ENCODE measurements at regions of chr11 and their contacts with region 1.

Region 1: GRCh38 chr11:86938900-86939880 is 16.0 kb downstream of the FZD4 start:
- DNase-seq: no peak
- ATAC-seq: peak in 3 of 4 donors; percentile 22 to 56 (median 40)
- H3K4me3 ChIP-seq: peak overlapping the region; percentile 57
- H3K27ac ChIP-seq: peak overlapping the region; percentile 75
- H3K4me1 ChIP-seq: peaks cover 51% of the 10 kb centered on the region
- H3K27me3 ChIP-seq: no peaks in the 10 kb centered on the region
- CTCF ChIP-seq: peak; percentile 70

Region 2: DNA sequence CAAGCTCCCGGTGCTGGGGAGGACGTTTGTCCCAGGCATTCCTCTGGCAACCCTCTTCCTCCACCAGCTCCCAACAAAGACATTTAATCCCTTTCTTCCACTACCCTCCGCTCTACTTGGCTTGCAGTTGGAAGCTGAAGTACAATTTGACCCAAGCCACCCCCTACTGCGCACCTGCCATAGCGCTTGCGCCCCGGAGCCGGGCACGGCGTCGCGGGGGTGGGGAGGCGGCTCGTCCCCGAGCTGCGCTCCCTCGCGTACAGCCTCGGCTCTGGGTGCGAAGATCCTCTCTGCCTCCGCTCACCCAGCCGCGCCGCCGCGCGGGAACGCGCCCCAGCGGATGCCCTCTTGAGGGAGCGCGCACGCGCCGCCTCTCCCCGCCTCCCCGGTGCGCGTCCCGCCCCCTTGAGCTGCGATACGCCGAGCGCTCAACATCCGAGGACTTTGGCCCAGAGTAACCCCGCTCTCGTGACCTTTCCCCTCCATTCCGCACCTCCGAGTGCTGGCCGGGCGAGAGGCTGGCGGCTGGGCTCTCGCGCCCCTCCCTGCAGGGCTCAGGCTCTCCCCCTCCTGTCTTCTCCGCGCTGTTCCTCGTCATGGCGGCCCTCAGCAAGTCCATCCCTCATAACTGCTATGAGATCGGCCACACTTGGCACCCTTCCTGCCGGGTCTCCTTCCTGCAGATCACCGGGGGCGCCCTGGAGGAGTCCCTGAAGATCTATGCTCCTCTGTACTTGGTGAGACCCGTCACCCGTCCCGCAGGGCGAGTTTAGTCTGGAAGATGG is 98.5 kb after region 1 on chr11 and contains the start of gene TMEM135:
- intact Hi-C with region 1: loop called in 1 of 2 experiments (anchors 5 kb)
- DNase-seq: peak; percentile 95 to 97
- ATAC-seq: peak; percentile 97 to 98 (median 98)
- H3K4me3 ChIP-seq: peak within 1 kb of the TSS; percentile 93
- H3K27ac ChIP-seq: peak within 1 kb of the TSS; percentile 81
- H3K4me1 ChIP-seq: peaks cover 21% of the 10 kb centered on the region
- H3K27me3 ChIP-seq: no peaks in the 10 kb centered on the region
- CTCF ChIP-seq: peak; percentile 6
- total RNA-seq, gene TMEM135: 9.4 to 26.6 (median 16.2) TPM

Region 3: GRCh38 chr11:87125257-87125656 is 186.1 kb after region 1 on chr11:
- intact Hi-C with region 1: loop called in 1 of 2 experiments (anchors 10 kb)
- DNase-seq: no peak
- ATAC-seq: peak in 3 of 4 donors; percentile 85 to 89 (median 85)
- H3K4me3 ChIP-seq: no peak overlapping the region
- H3K27ac ChIP-seq: peak overlapping the region; percentile 62
- H3K4me1 ChIP-seq: peaks cover 6% of the 10 kb centered on the region
- H3K27me3 ChIP-seq: no peaks in the 10 kb centered on the region
- CTCF ChIP-seq: no peak

Region 4: GRCh38 chr11:87281496-87281895 is 342.3 kb after region 1 on chr11:
- intact Hi-C with region 1: loop called in 1 of 2 experiments (anchors 2 kb)
- DNase-seq: no peak
- ATAC-seq: peak; percentile 60 to 90 (median 76)
- H3K4me3 ChIP-seq: no peak overlapping the region
- H3K27ac ChIP-seq: no peak overlapping the region
- H3K4me1 ChIP-seq: peaks cover 16% of the 10 kb centered on the region
- H3K27me3 ChIP-seq: no peaks in the 10 kb centered on the region
- CTCF ChIP-seq: peak; percentile 31

Region 5: GRCh38 chr11:87290304-87290922 is 351.2 kb after region 1 on chr11:
- intact Hi-C with region 1: loop called (anchors 2 kb)
- DNase-seq: no peak
- ATAC-seq: peak in 2 of 4 donors; percentile 47 to 74
- H3K4me3 ChIP-seq: no peak overlapping the region
- H3K27ac ChIP-seq: no peak overlapping the region
- H3K4me1 ChIP-seq: no peaks in the 10 kb centered on the region
- H3K27me3 ChIP-seq: no peaks in the 10 kb centered on the region
- CTCF ChIP-seq: peak; percentile 74

Region 6: GRCh38 chr11:87421422-87421821 is 482.2 kb after region 1 on chr11:
- intact Hi-C with region 1: loop called in 1 of 2 experiments (anchors 5 kb)
- DNase-seq: no peak
- ATAC-seq: peak; percentile 75 to 92 (median 86)
- H3K4me3 ChIP-seq: no peak overlapping the region
- H3K27ac ChIP-seq: no peak overlapping the region
- H3K4me1 ChIP-seq: peaks cover 8% of the 10 kb centered on the region
- H3K27me3 ChIP-seq: no peaks in the 10 kb centered on the region
- CTCF ChIP-seq: peak; percentile 84

Measured in psoas muscle (tissue), 8 donors.